Activated CD4-positive, alpha-beta T cell treated with anti-CD3 and anti-CD28 coated beads, Interleukin-2, amount 10 ng/mL, durations not matched to agents 7 days and 5 days (primary cell): ENCODE measurements at regions of chr15 and their contacts with region 1.

Region 1: GRCh38 chr15:86624261-86625036 is 544.8 kb downstream of the AGBL1 start:
- DNase-seq: peak; percentile 60
- H3K4me3 Mint-ChIP-seq: no peak overlapping the region
- H3K27ac Mint-ChIP-seq: no peak overlapping the region
- H3K4me1 Mint-ChIP-seq: peaks cover 32% of the 10 kb centered on the region
- H3K27me3 Mint-ChIP-seq: peaks cover 2% of the 10 kb centered on the region

Region 2: DNA sequence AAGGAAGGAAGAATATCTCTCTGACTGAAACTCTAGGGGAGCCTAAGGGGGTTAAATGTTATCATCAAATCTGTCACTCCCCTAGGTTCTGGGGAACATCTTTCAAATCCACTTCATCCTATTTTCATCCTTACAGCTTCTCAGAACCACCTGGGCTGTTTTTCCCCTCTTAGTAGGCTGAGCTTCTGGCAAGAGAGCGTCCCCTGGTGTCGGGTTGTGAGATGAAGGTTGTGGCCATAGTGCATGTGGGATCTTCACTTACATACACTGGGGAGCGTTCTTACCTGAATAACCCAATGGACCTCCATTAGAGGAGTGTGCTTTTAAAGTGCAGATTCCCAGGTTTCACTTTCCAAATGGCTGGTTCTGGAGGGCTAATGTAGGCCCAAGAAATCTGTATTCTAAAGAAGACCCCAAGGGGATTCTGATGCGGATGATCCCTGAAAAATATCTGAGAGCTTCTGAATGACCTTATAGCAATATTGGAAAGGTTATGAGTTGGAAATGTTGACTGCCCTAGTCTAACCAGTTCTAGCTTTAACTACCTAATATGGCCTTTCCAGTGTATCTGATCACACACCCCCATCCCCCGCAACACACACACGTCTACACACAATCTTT is 118.9 kb after region 1 on chr15:
- CTCF ChIA-PET with region 1: interaction called, 21 read pairs
- POLR2A ChIA-PET with region 1: no interaction called
- DNase-seq: peak; percentile 64
- H3K4me3 Mint-ChIP-seq: no peak overlapping the region
- H3K27ac Mint-ChIP-seq: no peak overlapping the region
- H3K4me1 Mint-ChIP-seq: no peaks in the 10 kb centered on the region
- H3K27me3 Mint-ChIP-seq: no peaks in the 10 kb centered on the region